OCI-LY7 (cell line): ENCODE measurements at regions of chr5 and their contacts with region 1.

Region 1: GRCh38 chr5:77957931-77958521 is 181.9 kb upstream of the TBCA start:
- DNase-seq: no peak
- H3K4me3 ChIP-seq: no peak overlapping the region
- H3K27ac ChIP-seq: no peak overlapping the region
- H3K4me1 ChIP-seq: no peaks in the 10 kb centered on the region
- CTCF ChIP-seq: no peak

Region 2: DNA sequence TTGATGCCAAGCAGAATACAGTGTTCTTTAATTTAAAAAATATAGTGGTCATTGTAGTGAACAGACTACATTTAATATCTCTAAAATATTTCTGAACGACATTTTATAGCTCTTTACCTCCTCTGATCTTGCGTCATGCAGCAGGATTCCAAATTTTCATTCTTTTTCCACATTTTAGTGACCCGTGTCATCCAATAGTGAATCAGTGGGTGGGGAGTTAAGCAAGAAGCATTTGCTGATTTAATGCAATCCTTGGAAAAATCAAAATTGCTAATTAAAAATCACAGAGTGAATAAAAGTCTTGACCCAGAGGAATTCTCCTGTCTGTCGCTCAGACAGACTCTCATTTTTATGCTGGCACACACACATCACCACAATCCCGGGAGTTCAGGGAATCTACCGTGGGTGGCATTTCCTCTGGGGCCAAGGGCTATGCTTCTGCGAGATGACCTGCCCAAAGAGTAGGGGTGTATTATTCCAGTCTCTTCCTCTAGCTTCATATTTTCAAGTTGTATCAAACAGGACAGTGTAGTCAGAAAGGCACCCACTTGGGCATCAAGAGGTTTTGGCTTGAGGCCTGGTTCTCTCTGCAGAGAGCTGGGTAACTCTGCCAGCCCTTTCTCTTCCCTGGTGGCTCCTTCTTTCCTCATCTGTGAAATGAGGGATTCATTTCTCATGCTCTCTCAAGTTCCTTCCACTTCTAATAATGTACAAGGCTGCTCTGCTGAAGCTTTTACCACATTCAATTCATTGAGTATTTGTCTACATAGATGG is 294.7 kb before region 1 on chr5:
- CTCF ChIA-PET with region 1: no interaction called
- POLR2A ChIA-PET with region 1: no interaction called
- intact Hi-C with region 1: no loop called
- DNase-seq: no peak
- H3K4me3 ChIP-seq: no peak overlapping the region
- H3K27ac ChIP-seq: no peak overlapping the region
- H3K4me1 ChIP-seq: no peaks in the 10 kb centered on the region
- CTCF ChIP-seq: no peak

Region 3: DNA sequence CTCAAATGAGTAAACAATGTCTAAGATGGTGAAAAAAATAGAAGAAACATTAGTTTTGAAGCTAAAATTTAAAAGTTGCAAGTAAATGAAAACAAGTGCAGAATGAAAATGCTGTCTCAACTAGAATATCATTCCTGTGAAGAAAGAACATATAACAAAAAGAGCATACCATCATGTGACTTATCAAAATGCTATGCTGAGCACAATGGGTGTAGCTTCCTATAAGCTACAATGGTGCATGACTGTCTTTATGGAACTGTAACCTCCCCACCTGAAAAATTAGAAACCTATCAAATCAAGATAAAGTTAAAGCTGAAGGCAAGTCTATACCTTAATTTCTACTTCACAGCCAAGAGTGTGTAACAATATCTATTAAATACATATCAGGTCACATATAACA is 144.5 kb after region 1 on chr5:
- CTCF ChIA-PET with region 1: no interaction called
- POLR2A ChIA-PET with region 1: no interaction called
- intact Hi-C with region 1: no loop called
- DNase-seq: no peak
- H3K4me3 ChIP-seq: no peak overlapping the region
- H3K27ac ChIP-seq: no peak overlapping the region
- H3K4me1 ChIP-seq: no peaks in the 10 kb centered on the region
- CTCF ChIP-seq: no peak

Region 4: DNA sequence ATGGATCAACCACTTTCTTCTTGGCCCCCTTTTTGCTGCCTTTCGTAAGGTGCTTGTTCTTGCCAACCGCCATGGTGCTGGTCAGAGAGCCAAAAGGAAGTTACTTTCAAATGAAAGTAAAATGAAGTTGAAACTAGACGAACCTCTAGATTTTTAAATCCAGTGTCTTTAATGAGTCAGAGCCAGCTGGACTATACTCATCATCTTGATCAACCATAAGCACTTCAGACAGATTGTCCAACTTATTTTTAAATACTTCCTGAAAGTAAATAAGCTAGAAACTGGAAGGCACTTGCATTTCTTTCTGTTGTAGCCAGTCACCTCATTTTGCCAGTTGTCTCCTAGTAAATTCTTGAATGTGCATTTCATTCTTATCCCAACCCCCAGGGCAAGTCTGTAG is 1326.8 kb after region 1 on chr5:
- CTCF ChIA-PET with region 1: no interaction called
- POLR2A ChIA-PET with region 1: interaction called, 11 read pairs
- intact Hi-C with region 1: no loop called
- DNase-seq: no peak
- H3K4me3 ChIP-seq: no peak overlapping the region
- H3K27ac ChIP-seq: no peak overlapping the region
- H3K4me1 ChIP-seq: no peaks in the 10 kb centered on the region
- CTCF ChIP-seq: no peak